Activated CD4-positive, alpha-beta memory T cell treated with anti-CD3 and anti-CD28 coated beads for 36 hours (primary cell): ENCODE measurements at regions of chr6 and their contacts with region 1.

Region 1: GRCh38 chr6:106097411-106098231 is 11.5 kb downstream of the PRDM1 start:
- DNase-seq: peak; percentile 69
- H3K4me3 Mint-ChIP-seq: peak overlapping the region; percentile 91
- H3K27ac Mint-ChIP-seq: peak overlapping the region; percentile 96
- H3K4me1 Mint-ChIP-seq: peaks cover 77% of the 10 kb centered on the region
- H3K27me3 Mint-ChIP-seq: peaks cover 2% of the 10 kb centered on the region

Region 2: DNA sequence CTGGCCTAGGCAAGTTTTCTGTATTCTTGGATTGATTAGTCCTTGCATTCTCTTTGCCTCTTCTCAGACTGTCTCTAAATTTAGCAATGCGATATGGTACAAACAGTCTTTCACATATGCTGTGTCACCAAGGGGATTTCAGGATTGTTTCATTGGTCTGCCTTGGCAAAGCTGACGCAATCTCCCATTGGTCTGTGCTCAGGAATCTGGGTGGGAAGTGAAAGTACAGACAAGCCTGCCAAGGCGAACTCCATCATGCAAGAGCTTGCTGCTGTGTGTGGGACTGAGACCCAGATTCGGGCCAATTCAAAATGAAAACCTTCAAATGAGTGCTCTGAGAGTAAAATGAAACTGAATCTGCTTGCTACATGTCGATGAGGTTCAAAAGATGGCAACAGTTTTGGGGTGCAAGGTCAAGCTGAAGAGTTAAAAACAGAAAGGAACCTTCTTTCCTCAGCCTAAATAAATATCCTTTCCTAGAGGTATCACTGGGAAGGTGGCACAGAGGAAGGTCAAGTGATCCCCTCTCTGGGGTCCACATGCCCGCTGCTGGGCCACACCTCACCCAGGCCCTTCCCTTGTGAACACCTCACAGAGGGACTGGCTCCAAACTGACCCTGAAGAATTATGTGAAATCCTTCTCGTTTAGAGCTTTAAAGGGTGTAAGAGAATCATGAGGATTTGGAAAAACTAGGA is 495.9 kb before region 1 on chr6:
- CTCF ChIA-PET with region 1: no interaction called
- POLR2A ChIA-PET with region 1: interaction called, 3 read pairs
- intact Hi-C with region 1: loop called (anchors 5 kb)
- DNase-seq: peak; percentile 86
- H3K4me3 Mint-ChIP-seq: peak overlapping the region; percentile 33
- H3K27ac Mint-ChIP-seq: peak overlapping the region; percentile 86
- H3K4me1 Mint-ChIP-seq: peaks cover 26% of the 10 kb centered on the region
- H3K27me3 Mint-ChIP-seq: peaks cover 3% of the 10 kb centered on the region

Region 3: GRCh38 chr6:105793130-105793529 is 304.5 kb before region 1 on chr6:
- CTCF ChIA-PET with region 1: no interaction called
- POLR2A ChIA-PET with region 1: no interaction called
- intact Hi-C with region 1: no loop called
- DNase-seq: peak; percentile 30
- H3K4me3 Mint-ChIP-seq: no peak overlapping the region
- H3K27ac Mint-ChIP-seq: no peak overlapping the region
- H3K4me1 Mint-ChIP-seq: peaks cover 54% of the 10 kb centered on the region
- H3K27me3 Mint-ChIP-seq: peaks cover 4% of the 10 kb centered on the region

Region 4: DNA sequence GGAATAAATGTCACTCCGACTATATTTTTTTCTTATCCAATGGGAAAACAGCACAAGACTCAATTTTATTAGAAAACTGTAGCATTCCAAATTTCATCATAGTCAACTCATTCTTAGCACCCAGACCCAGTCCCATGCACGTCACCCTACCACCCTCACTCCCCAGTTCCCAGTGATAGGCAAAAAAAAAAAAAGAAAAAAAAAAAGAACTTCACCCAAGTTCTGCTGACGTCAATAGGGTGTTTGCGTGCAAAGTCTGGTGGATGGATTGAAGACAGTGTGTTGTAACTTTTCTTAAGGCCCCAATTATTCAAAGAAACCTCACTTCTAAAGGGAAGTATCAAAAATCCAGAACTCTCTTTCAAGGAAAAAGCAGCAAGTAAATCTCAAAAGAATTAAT is 225.4 kb before region 1 on chr6:
- CTCF ChIA-PET with region 1: no interaction called
- POLR2A ChIA-PET with region 1: interaction called, 4 read pairs
- intact Hi-C with region 1: loop called (anchors 5 kb)
- DNase-seq: no peak
- H3K4me3 Mint-ChIP-seq: no peak overlapping the region
- H3K27ac Mint-ChIP-seq: no peak overlapping the region
- H3K4me1 Mint-ChIP-seq: peaks cover 12% of the 10 kb centered on the region
- H3K27me3 Mint-ChIP-seq: peaks cover 26% of the 10 kb centered on the region

Region 5: GRCh38 chr6:105992315-105992961 is 105.2 kb before region 1 on chr6:
- CTCF ChIA-PET with region 1: interaction called, 9 read pairs
- POLR2A ChIA-PET with region 1: interaction called, 28 read pairs
- intact Hi-C with region 1: loop called (anchors 1 kb)
- DNase-seq: peak; percentile 92
- H3K4me3 Mint-ChIP-seq: peak overlapping the region; percentile 88
- H3K27ac Mint-ChIP-seq: peak overlapping the region; percentile 81
- H3K4me1 Mint-ChIP-seq: peaks cover 32% of the 10 kb centered on the region
- H3K27me3 Mint-ChIP-seq: peaks cover 39% of the 10 kb centered on the region

Region 6: GRCh38 chr6:106163446-106163965 is 65.9 kb after region 1 on chr6:
- CTCF ChIA-PET with region 1: interaction called, 9 read pairs
- POLR2A ChIA-PET with region 1: interaction called, 23 read pairs
- intact Hi-C with region 1: loop called (anchors 1 kb)
- DNase-seq: peak; percentile 80
- H3K4me3 Mint-ChIP-seq: peak overlapping the region; percentile 64
- H3K27ac Mint-ChIP-seq: peak overlapping the region; percentile 91
- H3K4me1 Mint-ChIP-seq: peaks cover 60% of the 10 kb centered on the region
- H3K27me3 Mint-ChIP-seq: no peaks in the 10 kb centered on the region

Region 7: GRCh38 chr6:106223300-106223930 is 125.8 kb after region 1 on chr6:
- CTCF ChIA-PET with region 1: interaction called, 38 read pairs
- POLR2A ChIA-PET with region 1: no interaction called
- intact Hi-C with region 1: loop called (anchors 2 kb)
- DNase-seq: peak; percentile 75
- H3K4me3 Mint-ChIP-seq: no peak overlapping the region
- H3K27ac Mint-ChIP-seq: no peak overlapping the region
- H3K4me1 Mint-ChIP-seq: peaks cover 37% of the 10 kb centered on the region
- H3K27me3 Mint-ChIP-seq: no peaks in the 10 kb centered on the region